ENCODE measurements at regions of chr14 and their contacts with region 1.

Region 1: GRCh38 chr14:95431199-95432143 is 85.0 kb downstream of the SYNE3 start:
- DNase-seq: peak in 1 of 2 donors; percentile 68
- H3K4me3 ChIP-seq: no peak overlapping the region
- H3K27ac ChIP-seq: no peak overlapping the region
- H3K4me1 ChIP-seq: no peaks in the 10 kb centered on the region
- H3K27me3 ChIP-seq: no peaks in the 10 kb centered on the region
- CTCF ChIP-seq: peak in 3 of 7 experiments; percentile 16 to 34 (median 25)
- EP300 ChIP-seq: no peak
- POLR2A ChIP-seq: no peak

Region 2: GRCh38 chr14:94689218-94689984 is 742.1 kb before region 1 on chr14:
- intact Hi-C with region 1: loop called (anchors 10 kb)
- DNase-seq: peak; percentile 68 to 89
- H3K4me3 ChIP-seq: peak overlapping the region in 1 of 4 donors; percentile 26
- H3K27ac ChIP-seq: no peak overlapping the region
- H3K4me1 ChIP-seq: peaks cover 6 to 10% (median 8%) of the 10 kb centered on the region in 4 donors
- H3K27me3 ChIP-seq: peaks cover 0 to 20% (median 0%) of the 10 kb centered on the region in 3 donors
- CTCF ChIP-seq: peak in 5 of 7 experiments; percentile 76 to 96 (median 92)
- EP300 ChIP-seq: no peak
- POLR2A ChIP-seq: no peak

Region 3: GRCh38 chr14:95106971-95107370 is 324.5 kb before region 1 on chr14:
- intact Hi-C with region 1: loop called (anchors 10 kb)
- DNase-seq: no peak
- H3K4me3 ChIP-seq: no peak overlapping the region
- H3K27ac ChIP-seq: no peak overlapping the region
- H3K4me1 ChIP-seq: no peaks in the 10 kb centered on the region
- H3K27me3 ChIP-seq: no peaks in the 10 kb centered on the region
- CTCF ChIP-seq: no peak
- EP300 ChIP-seq: no peak
- POLR2A ChIP-seq: no peak

Region 4: DNA sequence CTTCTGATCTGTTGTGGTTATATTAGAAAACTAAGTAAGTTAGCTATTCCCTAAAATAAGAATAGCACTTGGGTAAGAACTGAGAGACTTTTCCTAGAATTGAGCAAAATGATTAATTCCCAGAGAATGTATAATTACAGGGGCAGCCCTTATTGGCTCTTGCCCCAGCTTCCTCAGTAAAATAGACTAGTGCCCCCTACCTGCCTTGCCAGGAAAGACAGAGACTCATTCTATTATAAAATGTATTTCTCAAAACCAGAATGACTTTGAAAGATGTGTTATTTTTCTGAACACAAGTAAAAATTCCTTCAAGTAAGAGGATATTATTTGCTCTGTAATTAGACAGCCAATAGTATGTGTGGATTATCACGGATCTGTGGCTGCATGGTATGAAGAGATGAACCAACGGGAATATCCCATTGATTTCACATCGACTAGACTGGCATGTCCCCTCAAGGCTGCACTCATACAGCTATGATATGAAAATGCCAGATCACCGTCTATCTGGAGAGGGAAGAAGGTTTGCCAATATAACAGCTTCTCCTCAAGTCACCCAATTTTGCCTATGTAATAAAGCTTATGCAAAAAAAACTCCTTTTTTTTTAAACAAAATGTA is 96.0 kb after region 1 on chr14:
- intact Hi-C with region 1: no loop called
- DNase-seq: peak; percentile 52 to 75
- H3K4me3 ChIP-seq: no peak overlapping the region
- H3K27ac ChIP-seq: peak overlapping the region in 3 of 5 donors; percentile 64 to 77 (median 73)
- H3K4me1 ChIP-seq: peaks cover 20 to 75% (median 56%) of the 10 kb centered on the region in 4 donors
- H3K27me3 ChIP-seq: no peaks in the 10 kb centered on the region
- CTCF ChIP-seq: peak in 5 of 7 experiments; percentile 34 to 86 (median 73)
- EP300 ChIP-seq: no peak
- POLR2A ChIP-seq: no peak

Region 5: DNA sequence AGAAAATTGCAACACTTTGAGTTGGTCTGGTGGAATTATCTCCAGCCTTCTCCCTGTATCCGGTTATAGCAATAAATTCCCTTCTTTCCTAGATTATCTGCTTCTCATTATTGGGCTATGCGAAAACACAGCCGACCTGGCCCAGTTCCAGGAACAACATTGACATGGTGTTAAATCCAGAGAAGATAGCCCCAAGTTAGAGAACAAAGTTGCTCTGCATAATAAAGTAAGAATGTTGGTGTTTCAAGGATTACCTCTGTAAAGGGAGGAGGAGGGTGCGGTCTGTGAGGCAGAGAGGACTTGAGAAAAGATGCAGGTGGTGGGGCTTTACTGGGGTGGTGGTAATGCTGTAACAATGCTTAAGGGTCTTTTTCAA is 270.4 kb after region 1 on chr14:
- intact Hi-C with region 1: no loop called
- DNase-seq: no peak
- H3K4me3 ChIP-seq: no peak overlapping the region
- H3K27ac ChIP-seq: no peak overlapping the region
- H3K4me1 ChIP-seq: no peaks in the 10 kb centered on the region
- H3K27me3 ChIP-seq: peaks cover 0 to 34% (median 6%) of the 10 kb centered on the region in 3 donors
- CTCF ChIP-seq: no peak
- EP300 ChIP-seq: no peak
- POLR2A ChIP-seq: no peak